Mammary epithelial cell (primary cell): ENCODE measurements at regions of chr17 and their contacts with region 1.

Region 1: GRCh38 chr17:49997791-49998703 is 3.0 kb upstream of the DLX3 start:
- DNase-seq: peak; percentile 68
- H3K4me3 ChIP-seq: no peak overlapping the region
- H3K27ac ChIP-seq: no peak overlapping the region
- H3K4me1 ChIP-seq: peaks cover 26% of the 10 kb centered on the region
- H3K27me3 ChIP-seq: no peaks in the 10 kb centered on the region
- CTCF ChIP-seq: peak; percentile 87 to 97

Region 2: GRCh38 chr17:49567871-49568694 is 430.0 kb before region 1 on chr17:
- CTCF ChIA-PET with region 1: interaction called, 3 read pairs
- dilution Hi-C with region 1: no loop called
- in situ Hi-C with region 1: loop called in 1 of 2 experiments (anchors 10 kb)
- intact Hi-C with region 1: loop called (anchors 1 kb)
- DNase-seq: peak; percentile 60
- H3K4me3 ChIP-seq: peak overlapping the region in 2 of 3 experiments; percentile 30 to 50
- H3K27ac ChIP-seq: no peak overlapping the region
- H3K4me1 ChIP-seq: peaks cover 21% of the 10 kb centered on the region
- H3K27me3 ChIP-seq: no peaks in the 10 kb centered on the region
- CTCF ChIP-seq: peak; percentile 85 to 93

Region 3: DNA sequence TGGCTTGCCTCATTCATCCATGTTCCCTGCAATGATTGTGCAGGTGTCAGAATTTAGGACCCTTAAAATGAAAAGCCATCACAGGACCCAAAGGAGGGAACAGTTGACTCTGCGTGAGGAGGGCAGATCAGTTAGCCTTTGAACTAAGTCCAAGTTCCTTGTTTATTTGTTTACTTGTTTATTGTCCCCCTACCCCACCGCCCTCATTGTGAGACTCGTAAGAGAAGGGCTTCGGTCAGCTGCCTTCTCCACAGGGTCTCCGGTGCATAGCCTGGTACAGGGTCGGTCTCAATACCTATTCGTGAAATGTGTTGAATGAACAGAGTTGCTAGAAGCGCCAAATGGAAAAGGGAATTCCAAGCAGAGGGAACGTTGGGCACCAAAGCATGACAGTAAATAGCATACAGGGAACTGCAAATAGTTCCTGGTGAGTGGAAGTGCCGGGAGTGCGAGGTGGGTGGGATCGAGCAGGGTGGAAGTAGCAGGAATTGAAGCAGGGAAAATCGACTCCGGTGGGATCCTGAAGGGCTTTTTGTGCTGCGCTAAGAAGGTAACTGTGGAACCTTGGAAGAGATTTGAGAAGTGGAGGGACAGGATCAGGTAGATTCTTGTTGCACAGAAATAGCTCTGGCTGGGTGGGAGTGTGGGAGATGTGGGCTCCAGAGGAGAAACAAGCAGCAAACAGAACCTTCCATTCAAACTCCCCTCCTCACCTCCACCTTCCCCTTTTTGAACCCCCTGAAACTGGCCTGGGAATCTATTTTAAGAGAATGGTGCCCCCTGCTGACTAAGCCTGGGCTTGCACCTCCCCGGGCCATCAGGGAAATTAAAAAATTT is 303.0 kb before region 1 on chr17:
- CTCF ChIA-PET with region 1: interaction called, 3 read pairs
- dilution Hi-C with region 1: no loop called
- in situ Hi-C with region 1: loop called in 1 of 2 experiments (anchors 10 kb)
- intact Hi-C with region 1: loop called (anchors 1 kb)
- DNase-seq: no peak
- H3K4me3 ChIP-seq: no peak overlapping the region
- H3K27ac ChIP-seq: no peak overlapping the region
- H3K4me1 ChIP-seq: no peaks in the 10 kb centered on the region
- H3K27me3 ChIP-seq: no peaks in the 10 kb centered on the region
- CTCF ChIP-seq: peak; percentile 85 to 92

Region 4: DNA sequence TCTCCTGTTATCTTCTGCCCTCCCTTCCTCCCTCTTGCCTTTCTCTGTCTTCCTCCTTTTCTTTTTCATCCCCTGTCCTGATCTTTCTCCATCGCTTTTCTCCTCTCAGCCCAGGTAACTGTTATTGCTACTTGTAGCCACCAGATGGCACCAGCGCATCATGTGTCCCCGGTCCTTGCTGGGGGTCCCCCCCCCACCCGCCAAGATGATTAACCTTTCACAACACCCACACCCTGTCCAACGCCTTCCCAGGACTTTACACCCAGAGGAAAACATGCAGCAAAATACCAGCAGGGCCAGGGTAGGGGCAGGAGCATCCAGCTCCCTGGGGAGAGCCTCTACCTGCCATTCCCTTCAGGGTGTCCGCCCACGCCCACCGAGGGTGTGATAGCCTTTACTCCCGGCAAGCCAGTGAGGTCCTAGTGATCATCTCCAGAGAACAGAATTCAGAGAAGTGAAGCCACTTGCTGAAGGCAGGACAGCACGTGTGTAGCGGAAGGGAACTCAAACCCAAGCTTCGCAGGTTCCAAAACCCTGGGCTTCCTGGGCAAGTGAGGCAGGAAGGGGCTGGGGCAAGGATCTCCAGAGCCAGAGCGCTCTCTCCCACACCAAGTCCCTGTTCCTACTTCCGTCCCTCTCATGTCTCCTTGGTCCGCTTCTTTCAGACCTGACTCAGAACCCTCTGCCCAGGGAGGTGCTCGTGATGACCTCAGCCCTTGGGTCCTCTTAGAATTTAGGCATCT is 136.7 kb before region 1 on chr17:
- CTCF ChIA-PET with region 1: interaction called, 6 read pairs
- dilution Hi-C with region 1: no loop called
- in situ Hi-C with region 1: loop called (anchors 5 kb)
- intact Hi-C with region 1: loop called (anchors 1 kb)
- DNase-seq: peak; percentile 24
- H3K4me3 ChIP-seq: no peak overlapping the region
- H3K27ac ChIP-seq: no peak overlapping the region
- H3K4me1 ChIP-seq: no peaks in the 10 kb centered on the region
- H3K27me3 ChIP-seq: no peaks in the 10 kb centered on the region
- CTCF ChIP-seq: peak; percentile 73 to 91

Region 5: GRCh38 chr17:49910094-49910857 is 87.8 kb before region 1 on chr17:
- CTCF ChIA-PET with region 1: no interaction called
- dilution Hi-C with region 1: loop called (anchors 5 kb)
- in situ Hi-C with region 1: no loop called
- intact Hi-C with region 1: no loop called
- DNase-seq: peak; percentile 80
- H3K4me3 ChIP-seq: no peak overlapping the region
- H3K27ac ChIP-seq: no peak overlapping the region
- H3K4me1 ChIP-seq: peaks cover 7% of the 10 kb centered on the region
- H3K27me3 ChIP-seq: peaks cover 9% of the 10 kb centered on the region
- CTCF ChIP-seq: no peak

Region 6: GRCh38 chr17:49959183-49959935 is 38.7 kb before region 1 on chr17:
- CTCF ChIA-PET with region 1: interaction called, 3 read pairs
- dilution Hi-C with region 1: loop called (anchors 5 kb)
- in situ Hi-C with region 1: loop called (anchors 5 kb)
- intact Hi-C with region 1: no loop called
- DNase-seq: no peak
- H3K4me3 ChIP-seq: no peak overlapping the region
- H3K27ac ChIP-seq: no peak overlapping the region
- H3K4me1 ChIP-seq: peaks cover 6% of the 10 kb centered on the region
- H3K27me3 ChIP-seq: peaks cover 23% of the 10 kb centered on the region
- CTCF ChIP-seq: no peak

Region 7: DNA sequence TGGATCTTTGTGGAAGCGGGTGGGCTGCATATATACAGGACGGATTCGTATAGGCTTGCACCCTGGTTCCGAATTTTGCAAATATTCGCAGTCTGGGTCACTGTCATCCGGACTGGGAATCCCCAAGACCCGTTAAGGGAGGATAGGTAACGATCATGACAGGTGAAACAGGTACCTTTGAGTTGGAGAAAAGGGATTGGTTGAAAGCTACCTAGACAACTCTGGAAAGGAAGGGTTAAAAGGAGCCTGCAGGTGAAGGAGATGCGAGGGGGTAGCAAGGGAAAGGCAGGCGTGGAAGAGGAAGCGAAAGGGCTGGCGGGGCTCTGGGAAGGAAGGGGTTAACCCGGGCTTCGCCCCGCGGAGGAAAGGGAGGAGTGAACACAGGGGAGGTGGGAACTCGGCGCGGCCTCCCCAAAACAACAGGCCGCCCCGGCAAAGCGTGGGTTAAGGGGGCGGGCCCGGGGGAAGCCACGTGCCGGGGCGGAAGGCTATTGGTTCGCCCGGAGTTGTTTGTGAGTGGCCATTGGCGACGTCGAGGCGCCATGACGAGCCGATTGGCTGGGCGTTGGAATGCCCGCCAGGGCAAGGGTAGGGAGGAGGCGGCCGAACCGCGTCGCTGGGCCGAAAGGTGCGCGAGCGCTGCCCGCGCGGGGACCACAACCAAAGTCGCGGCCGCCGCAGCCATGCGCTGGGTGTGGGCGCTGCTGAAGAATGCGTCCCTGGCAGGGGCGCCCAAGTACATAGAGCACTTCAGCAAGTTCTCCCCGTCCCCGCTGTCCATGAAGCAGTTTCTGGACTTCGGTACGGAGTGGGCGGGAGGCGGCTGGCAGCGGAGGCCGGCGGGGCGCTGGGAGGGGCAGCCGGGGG is 96.9 kb after region 1 on chr17 and contains the start of gene PDK2:
- CTCF ChIA-PET with region 1: no interaction called
- dilution Hi-C with region 1: no loop called
- in situ Hi-C with region 1: no loop called
- intact Hi-C with region 1: no loop called
- DNase-seq: peak; percentile 87
- H3K4me3 ChIP-seq: peak within 1 kb of the TSS in 2 of 3 experiments; percentile 13 to 54
- H3K27ac ChIP-seq: no peak within 1 kb of the TSS
- H3K4me1 ChIP-seq: peaks cover 9% of the 10 kb centered on the region
- H3K27me3 ChIP-seq: no peaks in the 10 kb centered on the region
- CTCF ChIP-seq: no peak
- total RNA-seq, gene PDK2: 18.2 to 24.8 TPM

Region 8: GRCh38 chr17:50345432-50346312 is 347.6 kb after region 1 on chr17 and contains the start of gene XYLT2:
- CTCF ChIA-PET with region 1: no interaction called
- dilution Hi-C with region 1: no loop called
- in situ Hi-C with region 1: no loop called
- intact Hi-C with region 1: no loop called
- DNase-seq: peak; percentile 78
- H3K4me3 ChIP-seq: peak within 1 kb of the TSS; percentile 81 to 91 (median 89)
- H3K27ac ChIP-seq: peak within 1 kb of the TSS; percentile 58
- H3K4me1 ChIP-seq: peaks cover 24% of the 10 kb centered on the region
- H3K27me3 ChIP-seq: no peaks in the 10 kb centered on the region
- CTCF ChIP-seq: no peak
- total RNA-seq, gene XYLT2: 46.3 to 78.3 TPM